ENCODE measurements at regions of chr10 and their contacts with region 1.

Region 1: GRCh38 chr10:1109795-1110673 is 53.8 kb downstream of the WDR37 start:
- DNase-seq: peak; percentile 90
- H3K4me3 Mint-ChIP-seq: peak overlapping the region; percentile 30
- H3K27ac Mint-ChIP-seq: peak overlapping the region; percentile 78
- H3K4me1 Mint-ChIP-seq: peaks cover 30% of the 10 kb centered on the region
- H3K27me3 Mint-ChIP-seq: no peaks in the 10 kb centered on the region

Region 2: DNA sequence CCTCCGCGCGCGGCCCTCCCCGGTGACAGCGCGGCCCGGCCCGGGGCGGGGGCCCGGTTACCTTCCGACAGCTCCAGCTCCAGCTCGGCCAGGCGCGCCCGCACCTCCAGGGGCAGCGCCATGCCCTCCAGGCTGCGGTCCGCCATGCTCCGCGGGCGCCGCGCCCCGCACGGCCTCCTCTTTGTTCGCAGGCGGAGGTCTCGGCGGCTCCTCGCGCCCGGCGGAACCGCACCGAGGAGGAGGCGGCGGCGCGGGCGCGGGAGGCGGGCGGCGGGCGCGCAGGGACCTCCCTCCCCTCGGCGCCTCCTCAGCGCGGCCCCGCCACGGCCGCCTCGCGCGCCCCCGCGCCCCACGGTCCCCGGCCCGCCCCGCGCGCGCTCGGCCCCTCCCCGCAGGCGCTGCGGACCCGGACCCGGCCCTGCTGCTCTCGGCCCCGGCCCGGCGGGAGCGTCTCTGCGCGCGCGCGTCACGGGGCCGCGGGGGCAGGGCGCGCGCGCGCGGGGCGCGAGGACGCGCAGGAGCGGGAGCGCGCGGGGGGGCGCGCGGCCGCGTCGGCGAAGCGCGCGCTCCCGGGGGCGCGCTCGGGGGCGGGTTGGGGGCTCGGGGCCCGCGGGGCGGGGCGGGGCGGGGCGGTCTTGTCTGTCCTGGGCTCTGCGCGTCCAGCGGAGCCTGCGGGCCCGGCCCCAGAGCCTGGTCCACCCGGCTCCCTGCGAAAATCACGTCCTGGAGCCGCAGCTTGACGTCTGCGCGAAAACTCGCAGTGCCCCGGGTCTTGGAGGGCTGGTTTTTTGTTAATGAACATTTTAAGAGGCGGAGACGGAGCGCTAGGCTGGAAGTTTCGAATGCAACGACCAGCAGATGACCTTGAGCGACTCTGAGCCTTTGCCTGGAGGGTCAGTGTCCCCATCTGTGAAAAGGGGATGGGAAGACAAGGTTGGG is 420.3 kb before region 1 on chr10 and contains the start of gene DIP2C:
- CTCF ChIA-PET with region 1: no interaction called
- intact Hi-C with region 1: no loop called
- DNase-seq: no peak
- H3K4me3 Mint-ChIP-seq: peak within 1 kb of the TSS; percentile 54
- H3K27ac Mint-ChIP-seq: no peak within 1 kb of the TSS
- H3K4me1 Mint-ChIP-seq: peaks cover 6% of the 10 kb centered on the region
- H3K27me3 Mint-ChIP-seq: peaks cover 44% of the 10 kb centered on the region
- total RNA-seq, gene DIP2C: 0.67 to 0.91 TPM

Region 3: GRCh38 chr10:810351-810846 is 299.6 kb before region 1 on chr10:
- CTCF ChIA-PET with region 1: no interaction called
- intact Hi-C with region 1: no loop called
- DNase-seq: no peak
- H3K4me3 Mint-ChIP-seq: no peak overlapping the region
- H3K27ac Mint-ChIP-seq: peak overlapping the region; percentile 46
- H3K4me1 Mint-ChIP-seq: no peaks in the 10 kb centered on the region
- H3K27me3 Mint-ChIP-seq: no peaks in the 10 kb centered on the region

Region 4: DNA sequence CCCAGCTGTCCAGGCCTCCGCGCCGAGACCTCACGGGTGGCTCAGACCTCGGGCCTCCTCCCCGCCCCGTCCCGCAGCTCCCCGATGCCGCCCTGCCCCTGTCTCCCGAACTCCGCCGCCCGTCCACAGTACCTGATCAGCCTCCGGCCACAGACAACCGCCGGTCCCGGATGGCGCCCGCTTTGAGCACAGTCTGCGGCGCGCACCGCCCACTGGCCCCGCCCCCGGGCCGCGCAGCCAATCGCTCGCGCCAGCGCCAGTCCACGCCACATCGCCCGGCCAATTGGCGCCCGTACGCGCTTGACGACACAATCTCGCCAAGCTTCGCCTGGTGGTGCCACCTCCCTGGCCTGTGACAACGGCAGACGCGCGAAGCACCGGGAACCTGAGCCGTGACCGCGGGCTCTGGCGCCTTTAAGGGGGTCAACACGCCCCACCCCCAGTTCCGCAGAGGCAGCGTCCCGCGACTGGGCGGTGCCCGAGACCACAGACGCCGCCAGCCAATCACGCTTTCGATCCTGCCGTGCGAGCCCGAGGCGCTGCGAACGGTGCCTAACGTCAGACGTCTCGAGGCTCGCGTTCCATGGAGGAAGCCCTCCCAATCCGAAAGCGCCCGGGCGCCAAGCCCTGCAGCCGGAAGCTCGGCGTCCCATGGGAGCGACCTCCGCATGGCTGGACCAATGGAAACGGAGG is 61.2 kb before region 1 on chr10 and contains the start of gene IDI1:
- CTCF ChIA-PET with region 1: no interaction called
- intact Hi-C with region 1: loop called (anchors 1 kb)
- DNase-seq: peak; percentile 98
- H3K4me3 Mint-ChIP-seq: peak within 1 kb of the TSS; percentile 94
- H3K27ac Mint-ChIP-seq: peak within 1 kb of the TSS; percentile 97
- H3K4me1 Mint-ChIP-seq: peaks cover 66% of the 10 kb centered on the region
- H3K27me3 Mint-ChIP-seq: no peaks in the 10 kb centered on the region
- total RNA-seq, gene IDI1: 68.2 to 68.5 TPM

Region 5: GRCh38 chr10:1240341-1240775 is 130.3 kb after region 1 on chr10:
- CTCF ChIA-PET with region 1: interaction called, 3 read pairs
- intact Hi-C with region 1: loop called (anchors 5 kb)
- DNase-seq: peak; percentile 59
- H3K4me3 Mint-ChIP-seq: peak overlapping the region; percentile 82
- H3K27ac Mint-ChIP-seq: peak overlapping the region; percentile 98
- H3K4me1 Mint-ChIP-seq: peaks cover 14% of the 10 kb centered on the region
- H3K27me3 Mint-ChIP-seq: peaks cover 8% of the 10 kb centered on the region

Region 6: DNA sequence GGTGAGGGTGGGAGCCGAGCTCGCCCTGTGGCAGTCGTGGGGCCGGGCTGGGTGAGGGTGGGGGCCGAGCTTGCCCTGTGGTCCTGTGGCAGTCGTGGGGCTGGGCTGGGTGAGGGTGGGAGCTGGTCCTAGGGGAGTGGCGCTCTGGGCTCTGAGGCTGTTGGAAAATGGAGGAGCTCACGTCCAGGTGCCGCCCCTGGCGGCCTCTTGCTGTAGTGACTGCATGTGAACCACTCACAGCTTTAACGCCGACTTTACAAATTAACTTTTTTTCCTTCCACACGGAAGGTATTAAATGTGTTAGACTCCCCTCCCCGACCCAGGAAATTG is 258.8 kb after region 1 on chr10:
- CTCF ChIA-PET with region 1: interaction called, 9 read pairs
- intact Hi-C with region 1: loop called (anchors 1 kb)
- DNase-seq: peak; percentile 68
- H3K4me3 Mint-ChIP-seq: no peak overlapping the region
- H3K27ac Mint-ChIP-seq: no peak overlapping the region
- H3K4me1 Mint-ChIP-seq: peaks cover 3% of the 10 kb centered on the region
- H3K27me3 Mint-ChIP-seq: peaks cover 28% of the 10 kb centered on the region

Region 7: GRCh38 chr10:1643161-1643907 is 533.3 kb after region 1 on chr10:
- CTCF ChIA-PET with region 1: no interaction called
- intact Hi-C with region 1: loop called (anchors 1 kb)
- DNase-seq: peak; percentile 78
- H3K4me3 Mint-ChIP-seq: no peak overlapping the region
- H3K27ac Mint-ChIP-seq: peak overlapping the region; percentile 93
- H3K4me1 Mint-ChIP-seq: peaks cover 24% of the 10 kb centered on the region
- H3K27me3 Mint-ChIP-seq: peaks cover 13% of the 10 kb centered on the region

Region 8: DNA sequence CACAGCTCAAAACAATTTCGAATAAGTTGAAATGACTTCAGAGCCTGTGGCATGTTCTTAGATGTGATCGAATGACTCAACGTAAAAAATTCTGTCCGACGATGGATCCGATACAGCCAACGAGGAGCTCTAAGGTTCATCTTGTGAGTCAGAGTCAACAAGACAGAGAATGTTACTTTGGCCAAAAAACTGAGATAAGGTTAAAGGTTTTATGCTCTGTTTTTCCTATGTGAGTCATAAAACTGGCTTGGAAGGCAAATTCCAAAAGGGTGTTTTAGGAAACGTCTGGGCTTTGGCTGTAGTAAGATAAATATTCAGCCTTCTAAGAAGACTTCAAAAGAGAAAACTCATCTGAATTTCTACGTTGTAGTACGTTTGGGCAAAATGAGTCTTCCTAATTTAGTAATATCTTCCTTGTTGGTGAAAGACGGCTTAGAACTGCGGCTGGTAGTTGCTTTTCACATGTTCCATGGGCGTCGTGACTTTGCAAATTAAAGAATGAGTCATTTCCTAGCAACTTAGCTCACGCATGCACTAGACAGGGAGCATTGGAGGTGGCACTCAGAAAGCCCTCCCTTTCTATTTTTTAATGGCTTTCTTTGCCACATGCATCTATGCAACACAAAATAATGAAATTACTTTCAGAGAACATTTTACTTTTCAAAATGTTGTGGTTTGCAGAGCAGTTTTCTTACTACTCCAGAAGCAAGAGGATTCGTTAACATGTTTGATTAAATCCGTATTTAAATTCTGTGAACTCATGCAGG is 1985.5 kb after region 1 on chr10:
- CTCF ChIA-PET with region 1: no interaction called
- intact Hi-C with region 1: loop called (anchors 1 kb)
- DNase-seq: peak; percentile 79
- H3K4me3 Mint-ChIP-seq: peak overlapping the region; percentile 27
- H3K27ac Mint-ChIP-seq: peak overlapping the region; percentile 81
- H3K4me1 Mint-ChIP-seq: peaks cover 56% of the 10 kb centered on the region
- H3K27me3 Mint-ChIP-seq: no peaks in the 10 kb centered on the region